Posterior vena cava (tissue), 2 donors: ENCODE measurements at regions of chr16 and their contacts with region 1.

Region 1: DNA sequence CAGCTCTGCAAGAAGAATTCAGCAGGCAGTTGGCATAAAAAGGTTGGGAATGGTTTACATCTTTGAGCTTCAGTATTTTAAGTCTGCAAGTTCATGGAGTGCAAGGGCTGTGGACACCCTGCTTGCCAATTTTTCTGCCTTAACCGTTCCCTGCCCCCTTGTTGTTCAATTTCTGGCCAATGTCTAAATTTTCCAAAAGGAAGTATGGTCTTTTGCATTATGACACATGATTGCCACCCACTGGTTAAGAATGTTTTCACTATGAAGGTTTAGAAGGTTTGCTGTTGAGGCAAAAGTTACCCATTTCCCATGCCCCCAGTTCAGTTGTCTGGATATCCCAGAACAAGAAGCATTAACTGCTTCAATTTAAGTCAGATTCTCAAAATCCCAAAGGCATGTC is 441.9 kb downstream of the CDH13 start:
- DNase-seq: no peak

Region 2: GRCh38 chr16:82031116-82032084 is 1037.3 kb before region 1 on chr16:
- intact Hi-C with region 1: no loop called
- DNase-seq: no peak

Region 3: GRCh38 chr16:82152196-82153112 is 916.2 kb before region 1 on chr16:
- intact Hi-C with region 1: no loop called
- DNase-seq: no peak

Region 4: DNA sequence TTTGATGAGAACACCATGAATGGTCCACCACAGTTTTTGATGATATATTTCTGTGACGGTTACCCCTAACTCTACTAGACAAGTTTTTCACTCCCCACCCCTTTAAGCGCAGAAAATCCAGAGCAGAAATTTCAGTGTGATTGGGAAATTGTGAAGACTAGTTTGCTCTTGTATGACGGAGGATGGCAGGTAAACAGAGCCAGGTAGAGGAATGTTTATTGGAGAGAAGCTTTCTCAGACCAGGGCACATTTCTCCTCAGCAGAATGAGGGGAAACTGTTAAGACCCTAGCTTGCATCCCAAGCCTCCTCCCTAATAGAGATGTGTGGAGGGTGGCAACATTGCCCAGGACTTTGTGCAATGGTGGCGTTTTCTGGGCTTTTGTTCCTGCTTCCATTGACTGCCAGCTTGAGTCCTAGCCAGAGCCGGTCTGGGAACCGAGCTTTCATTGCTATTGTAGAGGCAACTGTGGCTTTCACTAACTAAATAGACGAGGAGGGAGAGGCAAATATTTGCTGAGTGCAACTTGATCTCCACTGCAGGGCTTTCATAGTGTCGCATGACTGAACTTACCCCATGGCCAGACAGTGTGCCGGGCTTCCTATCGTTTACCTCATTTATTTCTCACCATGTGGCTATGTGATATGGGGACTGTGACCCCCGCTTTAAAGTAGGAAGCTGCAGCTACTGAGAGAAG is 739.1 kb before region 1 on chr16:
- intact Hi-C with region 1: loop called in 1 of 2 experiments (anchors 5 kb)
- DNase-seq: no peak

Region 5: DNA sequence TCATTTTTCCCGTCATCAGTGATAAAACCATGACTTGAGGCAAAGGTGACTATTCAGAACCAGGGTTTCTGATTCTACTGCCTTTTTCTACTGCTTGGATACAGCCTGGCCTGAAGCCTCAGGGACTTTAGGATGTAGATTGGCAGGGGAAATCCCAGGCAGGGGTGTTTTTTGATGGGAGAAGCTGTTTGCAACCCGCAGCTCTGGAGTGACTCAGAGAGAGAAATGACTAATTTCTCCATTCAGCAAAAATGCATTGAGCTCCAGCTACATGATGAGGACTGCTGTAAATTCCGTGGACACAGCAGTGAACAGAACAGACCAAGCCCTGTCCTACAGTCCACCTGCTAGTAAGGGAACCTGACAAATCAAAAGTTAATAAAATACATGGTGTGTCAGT is 118.7 kb after region 1 on chr16:
- intact Hi-C with region 1: no loop called
- DNase-seq: no peak